Aorta (tissue), 5 donors: ENCODE measurements at regions of chr3 and their contacts with region 1.

Region 1: DNA sequence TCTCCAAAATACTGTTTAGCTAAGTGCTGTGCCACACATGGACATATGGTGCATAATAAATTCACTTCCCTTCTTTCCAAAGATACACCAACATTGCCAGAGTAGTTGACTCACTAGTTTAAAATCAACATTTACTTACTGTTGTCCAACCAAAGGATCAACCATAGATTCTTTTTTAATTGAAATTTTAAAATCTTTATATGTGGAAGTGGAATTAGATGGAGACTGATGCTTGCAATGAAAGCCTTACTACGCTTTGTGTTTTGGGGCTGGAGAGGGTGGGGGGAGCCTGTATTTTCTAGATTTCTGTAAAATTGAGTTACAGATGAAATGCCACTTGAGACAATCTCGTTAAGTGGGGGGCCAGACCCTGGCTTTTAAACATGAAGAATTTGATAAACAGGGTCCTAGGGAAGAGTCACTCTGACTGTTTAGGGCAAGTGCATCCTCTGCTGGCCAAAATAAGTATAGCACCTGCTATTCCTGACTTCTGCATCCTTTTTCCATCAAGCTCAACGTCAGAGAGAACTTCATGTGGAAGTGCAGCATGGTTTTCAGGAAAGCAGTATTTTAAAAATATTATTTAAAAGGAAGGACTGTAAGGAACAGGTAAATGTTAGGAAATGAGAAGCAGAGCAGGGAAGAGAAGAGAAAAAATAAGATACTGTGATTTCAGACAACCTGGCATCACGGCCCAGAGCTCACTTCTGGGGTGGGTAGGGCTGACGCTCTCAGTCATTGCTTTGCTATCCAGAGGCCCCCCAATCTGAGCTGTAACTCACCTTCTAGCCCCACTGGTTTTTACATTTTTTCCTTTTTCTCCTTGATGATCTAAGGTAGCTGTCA is 76.7 kb downstream of the BOC start:
- DNase-seq: no peak
- ATAC-seq: peak; percentile 79
- H3K4me3 ChIP-seq: no peak overlapping the region
- H3K27ac ChIP-seq: no peak overlapping the region
- H3K4me1 ChIP-seq: no peaks in the 10 kb centered on the region
- H3K27me3 ChIP-seq: no peaks in the 10 kb centered on the region

Region 2: DNA sequence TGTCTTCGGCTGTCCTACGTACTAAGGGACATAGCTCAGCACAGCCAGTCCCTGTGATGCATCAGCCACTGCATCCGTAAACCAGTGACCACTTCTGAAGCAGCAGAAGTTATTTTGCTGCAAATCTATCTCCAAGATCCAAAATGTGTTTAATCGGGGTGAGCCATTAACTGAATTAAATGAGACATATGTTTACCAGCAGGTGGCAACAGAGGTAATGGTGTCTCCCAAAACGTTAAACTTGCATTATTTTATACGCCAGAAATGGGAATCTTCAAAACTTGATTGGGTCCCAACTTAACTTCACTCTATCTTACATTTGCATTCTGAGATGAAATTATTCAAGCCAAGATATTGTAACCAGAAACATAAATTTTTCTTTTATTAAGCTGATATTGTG is 152.0 kb before region 1 on chr3:
- intact Hi-C with region 1: loop called (anchors 1 kb)
- DNase-seq: no peak
- ATAC-seq: no peak
- H3K4me3 ChIP-seq: no peak overlapping the region
- H3K27ac ChIP-seq: no peak overlapping the region
- H3K4me1 ChIP-seq: no peaks in the 10 kb centered on the region
- H3K27me3 ChIP-seq: no peaks in the 10 kb centered on the region

Region 3: GRCh38 chr3:113498221-113499005 is 210.4 kb after region 1 on chr3:
- intact Hi-C with region 1: no loop called
- DNase-seq: no peak
- ATAC-seq: no peak
- H3K4me3 ChIP-seq: no peak overlapping the region
- H3K27ac ChIP-seq: no peak overlapping the region
- H3K4me1 ChIP-seq: no peaks in the 10 kb centered on the region
- H3K27me3 ChIP-seq: no peaks in the 10 kb centered on the region